ENCODE measurements at regions of chr3 and their contacts with region 1.

Region 1: DNA sequence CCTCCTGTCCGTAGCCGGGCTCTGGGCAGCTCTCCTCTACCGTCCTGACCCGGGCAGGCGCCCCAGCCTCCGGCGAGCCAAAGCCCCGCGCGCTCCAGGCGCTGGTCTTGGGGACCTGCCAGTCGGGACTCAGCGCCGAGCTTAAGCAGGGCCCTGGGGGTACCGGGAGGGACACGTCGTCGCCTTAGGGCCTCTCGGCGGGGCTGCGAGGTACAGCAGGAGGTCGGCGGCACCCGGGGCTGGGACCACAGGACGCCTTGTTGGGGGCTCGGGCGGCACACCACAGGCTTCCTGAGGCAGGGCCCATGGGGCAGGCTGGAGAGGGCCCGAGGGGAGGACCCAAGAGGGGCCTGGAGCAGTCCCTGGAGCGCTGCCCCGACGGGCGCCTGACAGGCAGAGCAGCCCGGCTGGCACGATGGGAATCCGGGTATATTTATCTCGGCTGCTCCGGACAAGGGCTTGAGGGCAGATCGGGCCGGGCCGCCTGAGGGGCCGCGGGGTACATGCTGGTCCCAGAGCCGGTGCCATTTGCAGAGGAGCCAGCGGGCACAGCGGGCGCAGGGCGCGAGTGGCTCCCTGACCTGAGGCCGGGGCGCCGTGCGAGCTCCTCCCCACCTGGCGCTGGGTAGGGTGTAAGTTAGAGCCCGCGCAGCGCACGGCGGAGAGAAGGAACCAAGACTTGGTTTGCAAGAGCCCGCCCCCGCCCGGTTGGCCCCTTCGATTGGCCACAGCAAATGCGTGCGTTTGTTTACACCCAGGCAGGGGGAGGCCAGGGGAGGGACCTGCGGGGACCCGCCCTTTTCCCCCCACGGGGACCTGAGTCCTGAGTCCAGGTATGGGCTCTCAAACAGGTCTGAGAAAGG is 574 bp downstream of the SLC38A3 start:
- DNase-seq: no peak
- H3K4me3 ChIP-seq: peak overlapping the region; percentile 39
- CTCF ChIP-seq: no peak

Region 2: DNA sequence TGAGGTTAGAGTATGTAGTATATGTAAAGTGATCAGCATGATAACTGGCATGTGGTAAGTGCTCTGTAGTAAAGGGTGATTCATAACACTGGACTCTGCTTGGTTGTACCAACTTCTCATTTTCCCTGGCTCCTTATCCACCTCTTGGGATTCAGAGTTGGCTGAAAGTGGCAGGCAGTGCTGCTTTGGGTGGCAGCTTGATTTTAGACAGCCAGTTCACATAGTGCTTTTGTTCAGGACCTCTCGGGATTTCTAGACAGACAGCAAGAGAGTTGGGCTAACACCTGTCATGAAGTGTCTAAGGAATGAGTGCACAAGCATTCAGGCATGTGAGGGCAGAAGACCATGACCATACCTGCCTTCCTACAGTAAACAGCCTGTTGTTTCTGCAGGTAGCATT is 196.7 kb before region 1 on chr3:
- CTCF ChIA-PET with region 1: no interaction called
- POLR2A ChIA-PET with region 1: no interaction called
- DNase-seq: peak; percentile 16
- H3K4me3 ChIP-seq: no peak overlapping the region
- CTCF ChIP-seq: no peak

Region 3: GRCh38 chr3:50227390-50228183 is 21.9 kb after region 1 on chr3:
- CTCF ChIA-PET with region 1: interaction called, 365 read pairs
- POLR2A ChIA-PET with region 1: no interaction called
- DNase-seq: no peak
- H3K4me3 ChIP-seq: peak overlapping the region; percentile 80
- CTCF ChIP-seq: peak; percentile 78

Measured in AG04449 (cell line).